ENCODE measurements at regions of chr12 and their contacts with region 1.

Region 1: DNA sequence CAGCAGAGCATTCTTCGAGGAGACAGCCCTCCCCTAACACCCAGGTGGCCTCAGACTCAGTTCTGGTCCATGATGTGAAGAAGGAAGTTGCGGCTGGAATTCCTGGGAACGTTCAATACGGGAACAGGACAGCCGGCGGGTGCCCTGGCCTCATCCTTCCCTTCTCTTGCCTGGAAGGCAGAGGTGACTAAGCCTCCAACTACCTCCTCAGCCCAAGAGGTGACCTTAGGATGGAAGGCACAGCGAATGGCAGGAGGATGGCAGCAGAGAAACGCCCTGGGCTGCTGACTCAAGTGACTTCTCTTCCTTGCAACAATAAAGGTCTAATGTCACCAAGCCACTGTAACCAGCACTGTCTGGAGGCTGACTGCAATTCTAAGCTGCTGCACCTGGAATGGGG is 36.1 kb downstream of the DHX37 start:
- DNase-seq: no peak
- ATAC-seq: no peak
- H3K4me3 ChIP-seq: no peak overlapping the region
- H3K27ac ChIP-seq: no peak overlapping the region
- H3K4me1 ChIP-seq: no peaks in the 10 kb centered on the region
- H3K27me3 ChIP-seq: no peaks in the 10 kb centered on the region
- CTCF ChIP-seq: no peak

Region 2: DNA sequence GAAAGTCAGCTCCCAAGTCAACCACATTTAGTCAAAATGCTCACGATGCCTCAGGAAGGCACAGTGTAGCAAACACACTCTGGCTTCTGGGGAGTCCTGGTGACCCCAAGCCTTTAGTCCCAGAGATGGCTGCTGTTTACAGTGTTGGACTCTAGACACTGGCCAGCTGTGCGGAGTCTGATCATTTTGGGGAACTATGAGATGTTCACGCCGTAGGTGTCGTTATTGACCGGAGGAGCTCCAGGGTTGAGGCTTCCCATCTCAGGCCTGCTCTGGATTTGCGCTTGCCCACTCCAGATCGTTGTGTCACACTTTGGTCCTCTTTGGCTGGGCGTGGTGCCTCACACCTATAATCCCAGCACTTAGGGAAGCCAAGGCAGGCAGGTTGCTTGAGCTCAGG is 68.3 kb after region 1 on chr12:
- intact Hi-C with region 1: loop called in 1 of 2 experiments (anchors 2 kb)
- DNase-seq: no peak
- ATAC-seq: no peak
- H3K4me3 ChIP-seq: no peak overlapping the region
- H3K27ac ChIP-seq: no peak overlapping the region
- H3K4me1 ChIP-seq: no peaks in the 10 kb centered on the region
- H3K27me3 ChIP-seq: no peaks in the 10 kb centered on the region
- CTCF ChIP-seq: no peak

Region 3: GRCh38 chr12:125092872-125093680 is 140.3 kb after region 1 on chr12:
- intact Hi-C with region 1: no loop called
- DNase-seq: peak; percentile 35 to 68
- ATAC-seq: peak; percentile 17 to 50 (median 36)
- H3K4me3 ChIP-seq: no peak overlapping the region
- H3K27ac ChIP-seq: no peak overlapping the region
- H3K4me1 ChIP-seq: no peaks in the 10 kb centered on the region
- H3K27me3 ChIP-seq: no peaks in the 10 kb centered on the region
- CTCF ChIP-seq: no peak